Head of caudate nucleus (tissue), 42 donors: ENCODE measurements at regions of chr10 and their contacts with region 1.

Region 1: DNA sequence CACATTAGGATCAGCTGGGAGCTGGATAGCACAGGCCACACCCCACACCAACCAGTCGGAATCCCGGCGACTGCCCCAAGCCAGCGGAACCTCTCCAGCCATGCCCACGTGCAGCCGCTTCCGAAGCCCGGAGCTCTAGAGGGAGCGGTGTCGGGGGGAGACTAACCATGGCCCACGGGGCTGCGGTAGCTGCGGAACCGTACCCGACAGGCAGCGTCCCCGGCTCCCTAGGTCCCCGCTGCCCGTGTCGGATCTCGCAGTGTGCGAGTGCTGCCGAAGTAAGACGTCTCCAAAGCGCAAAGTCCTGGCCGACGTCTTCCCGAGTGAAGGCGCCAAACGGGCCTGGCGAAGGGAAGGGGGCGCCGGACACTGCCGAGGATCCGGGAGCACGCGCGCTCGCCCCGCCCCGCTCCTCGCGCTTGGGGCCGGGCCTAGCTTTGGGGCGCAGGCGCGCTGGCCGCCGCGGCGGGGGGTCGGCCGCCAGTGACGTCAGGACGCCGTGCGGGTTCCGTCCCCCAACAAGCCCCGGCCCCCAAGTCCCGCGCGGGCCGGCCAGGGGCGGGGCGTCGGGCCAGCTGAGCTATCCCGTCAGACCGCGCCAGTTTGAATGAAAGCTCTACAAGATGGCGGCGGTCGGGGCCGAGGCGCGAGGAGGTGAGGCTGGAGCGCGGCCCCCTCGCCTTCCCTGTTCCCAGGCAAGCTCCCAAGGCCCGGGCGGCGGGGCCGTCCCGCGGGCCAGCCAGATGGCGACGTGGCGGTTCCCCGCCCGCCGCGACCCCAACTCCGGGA is at the start of gene SUV39H2:
- DNase-seq: peak; percentile 86 to 98 (median 96)

Region 2: DNA sequence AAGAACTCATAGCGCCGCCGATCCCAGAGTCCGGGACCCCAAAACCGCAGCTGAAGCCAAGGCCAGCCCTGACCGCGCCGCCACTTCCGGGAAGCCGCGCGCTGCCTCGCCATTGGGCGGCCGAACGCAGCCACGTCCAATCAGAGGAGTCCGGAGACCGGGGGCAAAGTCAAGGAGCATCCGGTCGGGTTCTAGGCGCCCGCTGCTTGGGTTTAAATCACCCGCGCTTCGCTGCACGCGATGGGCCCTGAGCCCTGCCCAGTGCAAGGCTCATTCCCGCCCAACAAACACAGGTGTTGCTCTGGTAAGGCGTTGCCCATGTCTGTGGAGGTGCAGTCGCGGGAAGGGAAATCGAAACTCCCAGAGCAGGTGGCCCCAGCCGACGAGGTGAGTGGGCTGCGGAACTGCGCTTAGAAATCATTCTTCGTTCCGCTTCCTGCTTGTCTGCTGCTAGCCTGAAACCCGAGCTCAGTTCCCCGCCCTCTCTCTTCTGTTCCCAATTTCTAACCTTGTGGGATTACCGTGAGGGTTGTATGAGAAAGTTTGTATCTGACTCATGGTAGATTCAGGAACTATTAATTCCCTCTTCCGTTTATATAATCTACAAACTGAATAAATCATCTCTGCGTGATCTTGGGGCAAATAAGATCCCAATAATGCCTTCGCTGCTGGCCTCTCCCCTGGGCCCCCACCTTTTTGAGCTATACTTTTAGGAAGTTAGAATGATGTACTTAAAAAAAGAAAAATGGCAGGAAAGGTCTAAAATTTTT is 75.7 kb after region 1 on chr10 and contains the start of gene DCLRE1C:
- intact Hi-C with region 1: loop called (anchors 5 kb)
- DNase-seq: peak; percentile 82 to 96 (median 92)

Region 3: DNA sequence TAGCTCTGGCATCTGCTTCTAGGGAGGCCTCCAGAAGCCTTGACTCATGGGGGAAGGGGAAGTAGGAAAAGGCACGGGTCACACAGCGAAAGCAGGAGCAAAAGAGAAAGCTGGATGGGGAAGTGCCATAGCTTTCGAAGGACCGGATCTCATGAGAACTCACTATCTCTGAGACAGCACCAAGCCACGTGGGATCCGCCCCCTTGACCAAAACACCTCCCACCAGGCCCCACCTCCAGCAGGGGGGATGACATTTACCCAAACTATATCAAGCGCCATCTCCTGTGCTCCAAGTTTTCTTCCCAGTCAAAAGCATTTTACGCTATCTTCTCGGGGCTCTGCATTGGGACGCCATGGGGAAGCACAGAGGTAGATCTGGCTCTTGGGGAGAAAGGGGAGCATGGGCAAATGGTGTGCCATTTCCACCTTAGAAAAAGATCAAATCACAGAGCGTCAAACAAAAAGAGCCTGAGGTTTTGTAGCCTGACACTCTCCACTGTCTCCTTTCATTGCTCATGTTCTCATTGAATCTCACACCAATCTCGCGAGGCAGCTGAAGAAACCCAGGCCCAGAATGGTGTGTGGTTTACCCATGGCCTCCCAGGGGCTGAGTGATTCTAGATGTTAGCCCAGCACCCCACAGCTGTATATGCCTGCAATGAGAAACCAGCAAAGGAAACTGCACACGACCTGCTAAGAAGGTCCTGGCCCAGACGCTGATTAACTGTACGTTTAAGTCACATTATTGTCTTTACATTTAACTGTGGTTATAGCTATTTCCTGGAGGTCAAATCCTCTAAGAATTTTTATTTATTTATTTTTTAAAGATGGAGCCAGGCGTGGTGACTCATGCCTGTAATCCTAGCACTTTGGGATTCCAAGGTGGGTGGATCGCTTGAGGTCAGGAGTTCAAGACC is 157.2 kb after region 1 on chr10:
- intact Hi-C with region 1: no loop called
- DNase-seq: peak in 31 of 42 donors; percentile 1 to 62 (median 23)